ENCODE measurements at regions of chr7 and their contacts with region 1.

Region 1: DNA sequence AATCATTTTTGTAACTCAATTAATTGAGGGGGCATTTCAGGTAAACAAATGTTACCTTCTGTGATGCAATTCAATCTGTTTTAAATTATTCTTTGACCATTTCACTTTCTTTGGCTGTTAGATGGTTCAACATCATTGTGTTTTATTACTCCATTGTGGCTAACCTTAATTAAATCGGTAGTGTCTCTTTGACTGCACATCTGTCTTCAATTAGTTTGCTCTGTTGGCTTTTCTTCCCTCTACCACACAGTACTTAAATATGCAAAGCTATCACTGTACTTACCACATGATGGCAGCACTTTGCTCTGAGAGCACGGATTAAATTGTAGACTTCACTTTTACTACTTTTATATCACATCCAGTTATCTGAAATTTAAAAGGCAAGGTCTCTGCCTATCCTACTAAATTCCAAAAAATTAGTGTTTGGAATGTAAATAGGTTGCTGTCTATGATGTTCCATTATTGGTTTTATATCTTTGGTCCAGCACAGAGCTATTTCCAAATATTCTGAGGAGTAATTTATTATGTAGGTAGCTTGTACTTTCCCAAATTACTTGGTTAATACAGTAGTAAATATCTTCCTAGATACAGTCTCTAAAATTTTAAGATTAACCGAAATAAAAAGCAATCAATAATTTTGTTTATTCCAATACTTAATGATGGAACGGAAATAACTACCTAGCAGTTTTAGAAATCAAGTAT is 352.0 kb downstream of the PCLO start:
- DNase-seq: no peak
- ATAC-seq: peak in 2 of 8 donors; percentile 52 to 55
- H3K4me3 ChIP-seq: no peak overlapping the region
- H3K27ac ChIP-seq: no peak overlapping the region
- H3K4me1 ChIP-seq: no peaks in the 10 kb centered on the region
- H3K27me3 ChIP-seq: no peaks in the 10 kb centered on the region
- CTCF ChIP-seq: peak in 8 of 9 donors; percentile 9 to 71 (median 58)

Region 2: GRCh38 chr7:82886324-82886723 is 75.6 kb after region 1 on chr7:
- intact Hi-C with region 1: no loop called
- DNase-seq: no peak
- ATAC-seq: no peak
- H3K4me3 ChIP-seq: no peak overlapping the region
- H3K27ac ChIP-seq: no peak overlapping the region
- H3K4me1 ChIP-seq: no peaks in the 10 kb centered on the region
- H3K27me3 ChIP-seq: no peaks in the 10 kb centered on the region
- CTCF ChIP-seq: no peak

Region 3: GRCh38 chr7:82897500-82897899 is 86.8 kb after region 1 on chr7:
- intact Hi-C with region 1: no loop called
- DNase-seq: no peak
- ATAC-seq: no peak
- H3K4me3 ChIP-seq: no peak overlapping the region
- H3K27ac ChIP-seq: no peak overlapping the region
- H3K4me1 ChIP-seq: no peaks in the 10 kb centered on the region
- H3K27me3 ChIP-seq: no peaks in the 10 kb centered on the region
- CTCF ChIP-seq: no peak

Region 4: DNA sequence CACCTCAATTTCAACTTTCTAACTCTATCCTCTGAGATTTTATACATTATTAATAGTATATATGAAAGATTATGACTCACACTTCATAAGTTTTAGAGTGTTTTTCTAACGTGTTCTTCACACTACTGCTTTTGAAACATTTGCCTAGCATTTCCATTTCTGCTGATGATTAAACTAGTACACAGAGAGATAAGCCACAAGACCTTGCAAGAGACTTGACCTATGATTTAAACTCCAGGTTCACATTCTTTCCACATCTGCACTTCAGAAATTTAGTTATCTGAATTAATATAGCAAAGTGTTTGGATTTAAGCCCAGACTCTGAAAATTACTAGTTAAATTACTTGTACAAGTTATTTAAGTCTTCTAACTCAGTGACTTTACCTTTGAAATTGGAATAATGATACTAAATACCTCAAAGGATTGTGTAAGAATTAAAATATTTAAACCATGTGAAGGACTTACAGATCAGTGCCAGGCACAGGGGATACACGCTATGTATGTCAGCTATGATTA is 285.4 kb after region 1 on chr7:
- intact Hi-C with region 1: no loop called
- DNase-seq: no peak
- ATAC-seq: no peak
- H3K4me3 ChIP-seq: no peak overlapping the region
- H3K27ac ChIP-seq: peak overlapping the region in 1 of 10 donors; percentile 10
- H3K4me1 ChIP-seq: no peaks in the 10 kb centered on the region
- H3K27me3 ChIP-seq: no peaks in the 10 kb centered on the region
- CTCF ChIP-seq: no peak

Region 5: GRCh38 chr7:83271212-83272099 is 460.7 kb after region 1 on chr7:
- intact Hi-C with region 1: loop called in 5 of 10 experiments (anchors 2 to 10 kb)
- DNase-seq: no peak
- ATAC-seq: peak in 1 of 8 donors; percentile 47
- H3K4me3 ChIP-seq: no peak overlapping the region
- H3K27ac ChIP-seq: no peak overlapping the region
- H3K4me1 ChIP-seq: no peaks in the 10 kb centered on the region
- H3K27me3 ChIP-seq: no peaks in the 10 kb centered on the region
- CTCF ChIP-seq: peak in 7 of 9 donors; percentile 12 to 49 (median 29)

Region 6: DNA sequence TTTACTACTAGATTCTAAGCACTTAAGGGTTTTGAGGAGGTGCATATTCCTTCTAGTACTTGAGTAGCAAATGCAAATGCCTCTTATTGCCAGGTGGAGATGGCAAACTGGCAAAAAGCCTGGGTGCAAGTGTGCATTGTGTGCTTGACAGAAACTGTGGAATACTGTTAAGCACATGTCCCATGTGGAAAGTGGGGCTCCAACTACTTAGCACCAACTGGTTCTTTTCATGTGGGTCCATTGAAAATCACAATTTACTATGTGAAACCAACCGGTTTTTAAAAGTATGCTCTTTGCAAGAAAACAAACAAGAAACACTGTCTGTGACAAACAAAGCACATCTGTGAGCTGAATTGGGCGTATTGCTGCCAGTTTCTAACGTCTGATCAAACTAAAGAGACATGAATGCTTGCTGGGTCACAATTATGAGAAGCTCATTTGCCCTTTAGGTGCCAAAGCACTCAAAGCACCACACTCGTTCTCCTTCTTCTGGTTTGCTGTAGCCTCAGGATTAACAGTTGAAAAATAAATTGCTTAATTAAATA is 640.9 kb after region 1 on chr7:
- intact Hi-C with region 1: no loop called
- DNase-seq: no peak
- ATAC-seq: no peak
- H3K4me3 ChIP-seq: no peak overlapping the region
- H3K27ac ChIP-seq: no peak overlapping the region
- H3K4me1 ChIP-seq: no peaks in the 10 kb centered on the region
- H3K27me3 ChIP-seq: no peaks in the 10 kb centered on the region
- CTCF ChIP-seq: no peak

Measured in heart right ventricle (tissue), 16 donors.